GM12878 (cell line): ENCODE measurements at regions of chr10 and their contacts with region 1.

Region 1: DNA sequence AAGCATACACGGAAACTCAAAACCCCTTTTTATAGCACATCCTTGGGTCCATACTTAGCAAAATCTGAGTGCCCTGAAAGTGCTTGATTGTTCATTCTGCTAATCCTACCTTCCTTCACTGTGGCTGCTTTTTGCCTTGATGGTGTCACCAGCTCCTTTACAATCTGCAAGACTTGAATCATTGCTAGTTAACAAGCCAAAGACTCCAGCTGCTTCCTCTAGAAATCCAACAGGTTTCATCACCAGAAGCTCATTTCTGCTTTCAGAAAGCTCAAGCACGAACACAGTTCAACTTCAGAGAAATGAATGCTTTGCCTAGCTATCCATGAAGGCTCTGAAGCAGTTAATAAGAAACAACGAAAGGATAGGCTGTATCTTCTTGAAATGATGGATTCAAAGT is 38.0 kb downstream of the USP6NL start:
- DNase-seq: peak; percentile 49
- ATAC-seq: peak; percentile 82
- H3K4me3 ChIP-seq: peak overlapping the region; percentile 53
- H3K27ac ChIP-seq: peak overlapping the region; percentile 77
- H3K4me1 ChIP-seq: peaks cover 27% of the 10 kb centered on the region
- H3K27me3 ChIP-seq: no peaks in the 10 kb centered on the region
- CTCF ChIP-seq: no peak
- EP300 ChIP-seq: no peak
- POLR2A ChIP-seq: no peak
- RAD21 ChIP-seq: no peak

Region 2: DNA sequence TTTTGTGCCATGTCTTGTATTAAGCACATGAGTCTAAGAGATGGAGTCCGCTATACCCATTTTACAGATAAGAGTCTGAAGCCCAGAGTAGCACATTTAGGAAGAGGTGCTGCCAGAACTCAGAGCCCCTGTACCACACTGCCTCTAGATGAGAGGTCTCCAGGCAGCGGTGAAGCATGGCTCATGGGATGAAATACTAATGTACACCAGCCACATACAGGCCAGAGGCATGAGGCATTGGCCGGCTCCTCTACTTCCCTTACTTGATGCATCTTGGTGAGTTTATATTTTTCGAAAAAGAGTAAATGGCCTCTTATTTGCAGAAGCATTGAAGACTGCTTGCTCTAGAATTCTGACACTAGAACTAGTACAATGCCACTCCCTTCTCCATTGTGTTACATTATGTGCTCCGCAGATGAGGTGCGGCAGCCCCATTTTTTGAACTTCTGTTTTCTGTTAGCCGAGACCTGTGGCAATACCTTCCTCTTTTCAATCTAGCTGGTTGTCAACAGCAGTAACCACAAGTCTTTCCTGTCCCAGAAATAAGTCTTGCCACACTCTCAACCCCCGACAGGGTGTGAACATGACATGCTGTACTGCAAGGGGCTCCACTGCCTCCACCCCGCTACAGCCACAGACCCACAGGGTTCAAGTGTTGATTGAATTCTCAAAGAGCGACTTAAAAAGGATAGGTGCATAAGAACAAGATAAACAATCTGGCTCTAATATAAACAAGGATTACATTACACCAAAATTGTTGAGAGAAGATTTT is 410.5 kb before region 1 on chr10:
- CTCF ChIA-PET with region 1: no interaction called
- POLR2A ChIA-PET with region 1: no interaction called
- RAD21 ChIA-PET with region 1: no interaction called
- SMC1A ChIA-PET with region 1: no interaction called
- in situ Hi-C with region 1: no loop called
- intact Hi-C with region 1: no loop called
- DNase-seq: peak; percentile 93
- ATAC-seq: peak; percentile 71
- H3K4me3 ChIP-seq: peak overlapping the region; percentile 96
- H3K27ac ChIP-seq: peak overlapping the region; percentile 95
- H3K4me1 ChIP-seq: peaks cover 28% of the 10 kb centered on the region
- H3K27me3 ChIP-seq: no peaks in the 10 kb centered on the region
- CTCF ChIP-seq: peak; percentile 6 to 24 (median 9); a peak in 2 of 6 replicates
- EP300 ChIP-seq: peak; percentile 91 to 93
- POLR2A ChIP-seq: peak; percentile 70
- RAD21 ChIP-seq: peak; percentile 29; the same call in 1 of the 2 replicates

Region 3: DNA sequence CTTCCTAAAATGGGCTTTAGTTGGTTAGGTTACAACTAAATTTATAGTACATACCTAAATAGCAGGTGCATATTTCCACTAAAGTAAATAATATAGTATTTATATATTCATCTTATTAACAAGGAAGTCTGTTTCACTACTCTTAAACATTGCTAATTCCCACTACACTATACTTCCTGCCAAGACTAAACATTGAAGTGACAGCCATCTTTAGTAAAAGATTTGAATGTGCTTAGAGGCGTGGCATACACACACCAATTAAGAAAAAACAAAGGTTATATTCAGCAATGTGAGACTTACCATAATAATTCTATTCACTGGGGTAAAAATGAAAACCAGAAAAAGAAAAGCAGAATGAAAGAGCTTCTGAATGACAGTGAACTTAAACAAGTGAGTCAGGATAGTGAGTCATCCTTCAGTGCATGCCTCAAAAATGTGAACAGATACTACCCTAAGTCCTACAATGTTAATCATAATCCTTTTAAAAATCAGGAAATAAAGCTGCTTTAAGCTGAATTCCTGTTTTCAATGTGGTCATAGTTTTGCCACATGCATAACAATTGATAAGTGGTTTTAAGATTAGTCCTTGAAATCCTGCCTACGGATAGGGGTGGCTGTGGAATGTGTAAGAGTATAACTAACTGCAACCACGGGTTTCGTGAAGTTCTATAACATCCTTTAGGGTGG is 21.4 kb before region 1 on chr10:
- CTCF ChIA-PET with region 1: interaction called, 5 read pairs
- POLR2A ChIA-PET with region 1: interaction called, 4 read pairs
- RAD21 ChIA-PET with region 1: interaction called, 8 read pairs
- SMC1A ChIA-PET with region 1: interaction called, 11 read pairs
- in situ Hi-C with region 1: no loop called
- intact Hi-C with region 1: no loop called
- DNase-seq: no peak
- ATAC-seq: peak; percentile 44
- H3K4me3 ChIP-seq: no peak overlapping the region
- H3K27ac ChIP-seq: peak overlapping the region; percentile 45; the same call in 1 of the 2 replicates
- H3K4me1 ChIP-seq: peaks cover 58% of the 10 kb centered on the region
- H3K27me3 ChIP-seq: no peaks in the 10 kb centered on the region
- CTCF ChIP-seq: no peak
- EP300 ChIP-seq: no peak
- POLR2A ChIP-seq: no peak
- RAD21 ChIP-seq: no peak

Region 4: GRCh38 chr10:11560076-11560709 is 13.3 kb before region 1 on chr10:
- CTCF ChIA-PET with region 1: interaction called, 7 read pairs
- POLR2A ChIA-PET with region 1: no interaction called
- RAD21 ChIA-PET with region 1: interaction called, 24 read pairs
- SMC1A ChIA-PET with region 1: interaction called, 21 read pairs
- in situ Hi-C with region 1: no loop called
- intact Hi-C with region 1: no loop called
- DNase-seq: peak; percentile 35
- ATAC-seq: peak; percentile 94
- H3K4me3 ChIP-seq: no peak overlapping the region
- H3K27ac ChIP-seq: no peak overlapping the region
- H3K4me1 ChIP-seq: peaks cover 26% of the 10 kb centered on the region; the same call in 1 of the 2 replicates
- H3K27me3 ChIP-seq: no peaks in the 10 kb centered on the region
- CTCF ChIP-seq: no peak
- EP300 ChIP-seq: no peak
- POLR2A ChIP-seq: no peak
- RAD21 ChIP-seq: no peak

Region 5: DNA sequence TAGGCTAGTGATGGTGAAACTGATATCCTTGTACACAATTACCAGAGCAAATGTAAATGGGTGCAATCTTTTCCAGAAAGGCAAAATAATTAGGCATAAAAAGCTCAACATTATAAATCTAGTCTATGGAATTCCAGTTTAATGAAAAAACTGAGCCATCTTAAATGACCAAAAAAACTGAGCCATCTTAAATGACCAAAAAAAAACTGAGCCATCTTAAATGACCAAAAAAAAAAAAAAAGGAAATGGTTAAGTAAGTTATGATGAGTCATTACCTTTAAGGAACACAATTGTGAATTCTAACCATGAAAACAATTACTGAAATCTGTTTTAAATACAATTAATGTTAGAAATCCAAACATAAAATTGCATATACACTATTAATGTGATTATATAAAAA is 12.7 kb after region 1 on chr10:
- CTCF ChIA-PET with region 1: interaction called, 4 read pairs
- POLR2A ChIA-PET with region 1: interaction called, 5 read pairs
- RAD21 ChIA-PET with region 1: no interaction called
- SMC1A ChIA-PET with region 1: interaction called, 22 read pairs
- in situ Hi-C with region 1: no loop called
- intact Hi-C with region 1: no loop called
- DNase-seq: no peak
- ATAC-seq: peak; percentile 36; the same call in 2 of the 3 replicates
- H3K4me3 ChIP-seq: no peak overlapping the region
- H3K27ac ChIP-seq: no peak overlapping the region; the same call in 1 of the 2 replicates
- H3K4me1 ChIP-seq: peaks cover 3% of the 10 kb centered on the region; the same call in 1 of the 2 replicates
- H3K27me3 ChIP-seq: no peaks in the 10 kb centered on the region
- CTCF ChIP-seq: no peak
- EP300 ChIP-seq: no peak
- POLR2A ChIP-seq: no peak
- RAD21 ChIP-seq: no peak

Region 6: DNA sequence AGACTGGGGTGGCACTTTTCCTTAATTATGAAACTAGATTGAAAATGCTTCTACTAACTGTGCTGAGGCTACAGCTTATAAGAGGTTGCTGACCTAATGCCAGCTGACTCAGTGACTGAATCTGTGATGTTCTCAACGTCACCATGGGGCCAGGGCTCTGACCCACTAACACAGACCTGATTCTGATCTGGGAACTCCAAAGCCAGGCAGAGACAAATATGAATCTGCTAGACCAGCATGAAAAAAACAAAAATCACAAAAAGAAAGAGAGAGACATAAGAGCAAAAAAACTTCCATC is 21.8 kb after region 1 on chr10:
- CTCF ChIA-PET with region 1: interaction called, 4 read pairs
- POLR2A ChIA-PET with region 1: interaction called, 3 read pairs
- RAD21 ChIA-PET with region 1: interaction called, 7 read pairs
- SMC1A ChIA-PET with region 1: interaction called, 12 read pairs
- in situ Hi-C with region 1: no loop called
- intact Hi-C with region 1: no loop called
- DNase-seq: no peak
- ATAC-seq: peak; percentile 67
- H3K4me3 ChIP-seq: peak overlapping the region; percentile 5; the same call in 1 of the 2 replicates
- H3K27ac ChIP-seq: peak overlapping the region; percentile 34
- H3K4me1 ChIP-seq: peaks cover 18% of the 10 kb centered on the region
- H3K27me3 ChIP-seq: no peaks in the 10 kb centered on the region
- CTCF ChIP-seq: no peak
- EP300 ChIP-seq: no peak
- POLR2A ChIP-seq: no peak
- RAD21 ChIP-seq: no peak

Region 7: DNA sequence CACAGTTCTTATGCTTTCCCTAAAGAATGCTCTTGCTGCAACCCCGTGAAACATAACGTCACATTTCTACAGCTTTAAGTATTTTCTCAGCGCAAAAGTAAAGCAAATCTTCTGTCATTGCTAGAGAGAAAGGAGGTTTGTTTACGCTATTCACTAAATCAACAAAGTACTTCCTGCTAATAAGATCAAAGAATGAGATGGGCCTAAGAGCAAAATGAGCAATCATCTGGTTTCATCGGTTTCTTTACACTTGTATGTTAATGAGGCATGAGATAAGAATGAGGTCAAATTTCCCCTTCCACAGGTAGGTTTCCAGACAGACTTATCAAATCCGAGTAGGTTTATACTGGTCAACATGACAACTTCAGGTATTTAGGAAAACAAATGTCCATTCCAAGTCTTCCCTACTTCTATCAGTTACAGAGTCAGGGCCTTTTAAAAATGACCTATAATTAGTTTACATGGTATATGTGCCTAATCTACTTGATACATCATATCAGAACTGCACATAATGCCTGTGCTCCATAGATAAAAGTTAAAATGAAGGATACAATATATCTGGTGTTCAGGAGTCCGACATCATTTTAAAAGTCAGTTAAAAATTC is 29.5 kb after region 1 on chr10:
- CTCF ChIA-PET with region 1: interaction called, 3 read pairs
- POLR2A ChIA-PET with region 1: interaction called, 3 read pairs
- RAD21 ChIA-PET with region 1: interaction called, 32 read pairs
- SMC1A ChIA-PET with region 1: interaction called, 27 read pairs
- in situ Hi-C with region 1: no loop called
- intact Hi-C with region 1: no loop called
- DNase-seq: peak; percentile 67
- ATAC-seq: peak; percentile 62
- H3K4me3 ChIP-seq: peak overlapping the region; percentile 54
- H3K27ac ChIP-seq: peak overlapping the region; percentile 64
- H3K4me1 ChIP-seq: peaks cover 45% of the 10 kb centered on the region
- H3K27me3 ChIP-seq: no peaks in the 10 kb centered on the region
- CTCF ChIP-seq: no peak
- EP300 ChIP-seq: peak; percentile 51 to 59; a peak in 2 of 4 replicates
- POLR2A ChIP-seq: no peak
- RAD21 ChIP-seq: no peak